ENCODE measurements at regions of chr19 and their contacts with region 1.

Region 1: GRCh38 chr19:8363803-8364771 is at the start of gene ANGPTL4:
- DNase-seq: no peak
- ATAC-seq: peak; percentile 67
- H3K4me3 ChIP-seq: peak within 1 kb of the TSS; percentile 56 to 79 (median 74); a peak in 5 of 6 replicates
- H3K27ac ChIP-seq: peak within 1 kb of the TSS; percentile 64
- H3K4me1 ChIP-seq: peaks cover 67% of the 10 kb centered on the region
- H3K27me3 ChIP-seq: peaks cover 0 to 3% of the 10 kb centered on the region in 2 experiments; a peak in 1 of 5 replicates
- CTCF ChIP-seq: peak; percentile 4; the same call in 1 of the 2 replicates
- EP300 ChIP-seq: no peak
- POLR2A ChIP-seq: peak; percentile 61 to 92; a peak in 3 of 4 replicates
- RAD21 ChIP-seq: no peak
- total RNA-seq, gene ANGPTL4: 0.20 and 0.80 TPM in 2 replicates

Region 2: GRCh38 chr19:8320564-8321059 is 43.5 kb before region 1 on chr19:
- CTCF ChIA-PET with region 1: no interaction called
- POLR2A ChIA-PET with region 1: no interaction called
- in situ Hi-C with region 1: no loop called
- intact Hi-C with region 1: no loop called
- DNase-seq: peak; percentile 25
- ATAC-seq: peak; percentile 53
- H3K4me3 ChIP-seq: peak overlapping the region; percentile 69 to 97 (median 82)
- H3K27ac ChIP-seq: peak overlapping the region; percentile 88
- H3K4me1 ChIP-seq: peaks cover 36% of the 10 kb centered on the region
- H3K27me3 ChIP-seq: no peaks in the 10 kb centered on the region; a peak in 1 of 5 replicates
- CTCF ChIP-seq: peak; percentile 26; the same call in 1 of the 2 replicates
- EP300 ChIP-seq: no peak
- POLR2A ChIP-seq: no peak
- RAD21 ChIP-seq: no peak

Region 3: DNA sequence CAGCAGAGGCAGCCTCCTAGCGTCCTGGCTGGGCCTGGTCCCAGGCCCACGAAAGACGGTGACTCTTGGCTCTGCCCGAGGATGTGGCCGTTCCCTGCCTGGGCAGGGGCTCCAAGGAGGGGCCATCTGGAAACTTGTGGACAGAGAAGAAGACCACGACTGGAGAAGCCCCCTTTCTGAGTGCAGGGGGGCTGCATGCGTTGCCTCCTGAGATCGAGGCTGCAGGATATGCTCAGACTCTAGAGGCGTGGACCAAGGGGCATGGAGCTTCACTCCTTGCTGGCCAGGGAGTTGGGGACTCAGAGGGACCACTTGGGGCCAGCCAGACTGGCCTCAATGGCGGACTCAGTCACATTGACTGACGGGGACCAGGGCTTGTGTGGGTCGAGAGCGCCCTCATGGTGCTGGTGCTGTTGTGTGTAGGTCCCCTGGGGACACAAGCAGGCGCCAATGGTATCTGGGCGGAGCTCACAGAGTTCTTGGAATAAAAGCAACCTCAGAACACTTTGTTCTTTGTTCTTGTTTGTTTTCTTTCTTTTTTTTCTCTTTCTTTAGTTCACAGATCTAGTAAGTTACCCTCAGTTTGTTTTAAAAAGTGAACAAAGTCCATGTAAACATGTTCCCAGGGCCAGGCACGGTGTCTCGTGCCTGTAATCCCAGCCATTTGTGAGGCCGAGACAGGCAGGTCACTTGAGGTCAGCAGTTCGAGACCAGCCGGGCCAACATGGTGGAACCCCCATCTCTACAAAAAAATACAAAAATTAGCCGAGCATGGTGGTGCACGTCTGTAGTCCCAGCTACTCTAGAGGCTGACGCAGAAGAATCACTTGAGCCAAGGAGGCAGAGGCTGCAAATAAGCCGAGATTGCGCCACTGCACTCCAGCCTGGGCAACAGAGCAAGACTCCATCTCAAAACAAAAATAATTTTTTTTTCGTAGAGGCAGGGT is 10.1 kb after region 1 on chr19:
- CTCF ChIA-PET with region 1: no interaction called
- POLR2A ChIA-PET with region 1: interaction called, 11 read pairs
- in situ Hi-C with region 1: no loop called
- intact Hi-C with region 1: no loop called
- DNase-seq: peak; percentile 98
- ATAC-seq: peak; percentile 91
- H3K4me3 ChIP-seq: no peak overlapping the region
- H3K27ac ChIP-seq: peak overlapping the region; percentile 84
- H3K4me1 ChIP-seq: peaks cover 70% of the 10 kb centered on the region
- H3K27me3 ChIP-seq: no peaks in the 10 kb centered on the region
- CTCF ChIP-seq: peak; percentile 91
- EP300 ChIP-seq: peak; percentile 96
- POLR2A ChIP-seq: peak in 1 of 2 experiments; percentile 23; a peak in 1 of 4 replicates
- RAD21 ChIP-seq: peak; percentile 94

Region 4: DNA sequence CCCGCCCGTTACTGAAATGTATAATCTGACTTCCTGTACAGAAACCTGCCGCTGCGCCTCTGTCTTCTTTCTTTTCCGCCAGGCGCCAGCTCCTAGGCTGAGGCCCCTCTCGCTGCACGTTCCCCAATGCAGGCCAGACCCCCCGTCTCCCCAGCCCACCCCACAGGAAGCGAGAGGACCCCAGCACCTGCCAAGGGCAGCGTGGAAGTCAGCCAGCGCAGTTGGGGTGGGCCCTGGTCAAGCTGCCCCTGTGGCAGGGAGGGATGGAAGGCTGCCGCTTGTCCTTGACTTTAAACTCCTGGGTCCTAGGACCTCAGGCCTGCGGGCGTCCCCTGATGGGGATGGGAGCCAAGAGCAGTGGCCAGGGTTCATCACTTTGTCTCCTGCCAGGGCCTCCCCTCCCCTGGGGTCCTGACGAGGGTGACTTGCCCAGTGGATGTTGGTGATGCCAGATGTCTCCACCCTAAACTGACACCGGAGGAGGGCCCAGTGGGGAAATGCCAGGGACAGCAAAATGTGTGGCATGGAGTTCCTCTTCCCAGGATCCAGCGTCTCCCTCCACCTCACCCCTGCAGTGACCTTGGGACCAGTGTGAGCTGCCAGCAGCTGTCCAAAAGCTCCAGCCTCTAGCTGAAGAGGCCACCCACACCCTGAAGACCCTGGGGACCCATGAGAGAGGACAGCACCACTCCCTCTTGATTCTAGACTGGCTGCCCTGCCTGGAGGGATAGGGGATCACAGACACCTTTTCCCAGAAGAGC is 40.5 kb after region 1 on chr19:
- CTCF ChIA-PET with region 1: no interaction called
- POLR2A ChIA-PET with region 1: no interaction called
- in situ Hi-C with region 1: no loop called
- intact Hi-C with region 1: no loop called
- DNase-seq: no peak
- ATAC-seq: peak; percentile 18
- H3K4me3 ChIP-seq: no peak overlapping the region
- H3K27ac ChIP-seq: no peak overlapping the region
- H3K4me1 ChIP-seq: 0 out of 2 replicates have a peak, but pooled peaks cover 16% of the 10 kb centered on the region
- H3K27me3 ChIP-seq: no peaks in the 10 kb centered on the region
- CTCF ChIP-seq: no peak
- EP300 ChIP-seq: no peak
- POLR2A ChIP-seq: no peak
- RAD21 ChIP-seq: no peak

Measured in HepG2 (cell line).